ENCODE measurements at regions of chr17 and their contacts with region 1.

Region 1: GRCh38 chr17:17859909-17860765 is 23.4 kb upstream of the SREBF1 start:
- DNase-seq: no peak
- H3K4me3 ChIP-seq: no peak overlapping the region
- H3K27ac ChIP-seq: no peak overlapping the region
- H3K4me1 ChIP-seq: peaks cover 6% of the 10 kb centered on the region
- H3K27me3 ChIP-seq: no peaks in the 10 kb centered on the region
- CTCF ChIP-seq: peak; percentile 88 to 98 (median 96)
- POLR2A ChIP-seq: no peak

Region 2: GRCh38 chr17:17681187-17681848 is 178.8 kb before region 1 on chr17 and contains the start of gene RAI1:
- intact Hi-C with region 1: loop called (anchors 5 kb)
- DNase-seq: no peak
- H3K4me3 ChIP-seq: peak within 1 kb of the TSS; percentile 72 to 99
- H3K27ac ChIP-seq: peak within 1 kb of the TSS; percentile 95
- H3K4me1 ChIP-seq: peaks cover 38% of the 10 kb centered on the region
- H3K27me3 ChIP-seq: no peaks in the 10 kb centered on the region
- CTCF ChIP-seq: peak in 2 of 3 experiments; percentile 44 to 74
- POLR2A ChIP-seq: peak in 1 of 2 donors; percentile 48
- total RNA-seq, gene RAI1: 29.2 TPM

Region 3: DNA sequence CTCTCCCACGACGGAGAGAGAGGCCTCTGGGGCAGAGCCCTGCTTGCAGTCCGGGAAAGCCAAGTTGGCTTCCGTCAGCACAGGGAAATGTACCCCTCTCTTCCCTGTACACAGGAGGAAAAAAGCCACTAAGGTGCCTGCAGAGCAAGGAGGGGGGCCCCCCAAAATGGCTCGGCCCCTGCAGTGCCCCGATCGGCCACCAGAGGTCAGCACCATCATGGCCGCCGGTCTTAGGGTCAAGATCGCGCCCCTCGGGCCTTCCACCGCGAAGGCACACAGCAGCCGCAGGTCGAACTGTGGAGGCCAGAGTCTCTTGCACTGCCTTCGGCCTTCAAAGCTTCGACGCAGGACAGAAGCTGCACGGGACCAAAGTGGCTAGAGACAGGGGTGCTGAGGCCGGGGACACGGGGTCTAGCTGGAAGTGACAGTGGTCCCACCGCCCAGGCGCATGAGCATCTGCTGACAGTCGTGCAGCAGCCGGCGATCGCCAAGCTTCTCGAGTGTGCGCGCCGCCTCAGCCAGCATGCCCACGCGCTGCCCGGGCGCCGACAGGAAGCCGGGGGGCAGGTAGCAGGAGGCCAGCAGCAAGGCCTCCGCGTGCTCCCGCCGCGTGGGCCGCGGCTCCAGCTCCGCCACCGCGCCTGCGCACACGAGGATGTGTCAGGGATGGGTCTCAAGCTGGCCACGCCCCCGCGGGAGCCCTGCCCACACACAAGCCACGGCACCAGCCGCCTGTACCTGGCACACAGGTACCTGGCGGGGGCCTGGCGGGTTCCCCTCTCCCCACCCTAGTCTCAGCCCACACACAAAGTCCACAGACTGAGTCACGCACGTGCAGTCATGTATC is 47.7 kb before region 1 on chr17:
- intact Hi-C with region 1: loop called (anchors 1 kb)
- DNase-seq: no peak
- H3K4me3 ChIP-seq: no peak overlapping the region
- H3K27ac ChIP-seq: peak overlapping the region; percentile 78
- H3K4me1 ChIP-seq: peaks cover 68% of the 10 kb centered on the region
- H3K27me3 ChIP-seq: no peaks in the 10 kb centered on the region
- CTCF ChIP-seq: peak; percentile 99
- POLR2A ChIP-seq: no peak

Region 4: GRCh38 chr17:17919169-17920107 is 59.3 kb after region 1 on chr17:
- intact Hi-C with region 1: loop called (anchors 10 kb)
- DNase-seq: no peak
- H3K4me3 ChIP-seq: no peak overlapping the region
- H3K27ac ChIP-seq: peak overlapping the region; percentile 51
- H3K4me1 ChIP-seq: peaks cover 60% of the 10 kb centered on the region
- H3K27me3 ChIP-seq: no peaks in the 10 kb centered on the region
- CTCF ChIP-seq: peak in 2 of 3 experiments; percentile 65 to 83
- POLR2A ChIP-seq: no peak

Measured in vagina (tissue), 2 donors.